ENCODE measurements at regions of chr1 and their contacts with region 1.

Region 1: DNA sequence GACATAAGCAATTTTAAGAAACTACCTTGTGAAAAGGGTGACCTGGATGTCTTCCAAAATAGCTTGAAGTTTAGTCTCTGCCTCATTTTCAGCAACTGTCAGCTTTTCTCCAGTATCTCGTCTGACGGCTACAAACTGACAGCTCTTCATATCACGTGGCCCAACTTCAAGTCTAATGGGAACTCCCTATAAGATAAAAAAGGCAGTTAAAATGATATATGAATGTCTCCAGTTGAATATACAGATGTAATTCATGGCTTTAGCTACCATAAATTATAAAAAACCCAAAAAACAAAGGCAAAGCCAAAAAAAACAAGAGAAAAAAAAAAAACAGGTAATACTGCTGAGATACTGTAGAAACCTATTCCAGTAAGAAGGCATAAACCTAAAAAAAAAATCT is 44.9 kb upstream of the SLC30A10 start:
- DNase-seq: no peak
- ATAC-seq: no peak
- H3K4me3 ChIP-seq: no peak overlapping the region
- H3K4me3 Mint-ChIP-seq: no peak overlapping the region
- H3K27ac ChIP-seq: no peak overlapping the region
- H3K27ac Mint-ChIP-seq: no peak overlapping the region
- H3K4me1 ChIP-seq: no peaks in the 10 kb centered on the region
- H3K4me1 Mint-ChIP-seq: no peaks in the 10 kb centered on the region
- H3K27me3 ChIP-seq: no peaks in the 10 kb centered on the region
- H3K27me3 Mint-ChIP-seq: no peaks in the 10 kb centered on the region
- CTCF ChIP-seq: no peak

Region 2: DNA sequence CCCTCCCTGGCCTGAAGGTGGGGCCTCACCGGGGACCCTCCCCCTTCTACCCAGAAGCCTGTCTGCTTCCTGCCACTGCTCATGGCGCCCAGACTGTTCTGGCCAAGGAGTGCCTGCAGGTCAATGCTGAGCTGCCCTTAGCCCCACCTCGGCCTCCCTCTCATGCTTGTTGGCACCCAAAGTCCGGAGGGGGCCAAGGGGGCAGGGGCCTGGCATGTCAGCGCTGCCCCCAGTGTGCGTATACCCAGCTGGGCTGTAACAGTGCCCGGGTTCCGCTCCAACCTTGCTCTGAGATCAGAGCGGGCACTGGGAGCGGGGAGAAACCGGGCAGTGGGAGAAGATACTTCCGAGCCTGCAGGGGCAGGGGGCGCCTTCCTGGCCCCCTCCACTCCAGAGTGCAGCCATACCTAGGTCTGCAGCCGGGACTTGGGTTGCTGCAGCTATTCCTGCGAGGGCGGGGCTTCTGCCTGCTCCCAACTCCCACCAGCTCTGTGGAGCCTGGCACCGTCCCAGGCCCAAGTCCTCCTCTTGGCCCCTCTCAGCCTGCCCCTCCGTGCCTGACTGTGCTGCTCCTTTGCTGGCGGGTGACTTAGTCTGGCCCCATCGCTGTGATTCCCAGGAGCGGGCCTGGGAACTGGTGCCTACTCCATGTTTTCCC is 1649.5 kb before region 1 on chr1:
- CTCF ChIA-PET with region 1: no interaction called
- POLR2A ChIA-PET with region 1: no interaction called
- intact Hi-C with region 1: loop called in 1 of 2 experiments (anchors 2 kb)
- DNase-seq: no peak
- ATAC-seq: no peak
- H3K4me3 ChIP-seq: no peak overlapping the region
- H3K4me3 Mint-ChIP-seq: no peak overlapping the region
- H3K27ac ChIP-seq: no peak overlapping the region
- H3K27ac Mint-ChIP-seq: no peak overlapping the region
- H3K4me1 ChIP-seq: no peaks in the 10 kb centered on the region
- H3K4me1 Mint-ChIP-seq: no peaks in the 10 kb centered on the region
- H3K27me3 ChIP-seq: no peaks in the 10 kb centered on the region
- H3K27me3 Mint-ChIP-seq: no peaks in the 10 kb centered on the region
- CTCF ChIP-seq: no peak

Region 3: GRCh38 chr1:219897914-219898313 is 75.3 kb before region 1 on chr1:
- CTCF ChIA-PET with region 1: no interaction called
- POLR2A ChIA-PET with region 1: no interaction called
- intact Hi-C with region 1: no loop called
- DNase-seq: no peak
- ATAC-seq: no peak
- H3K4me3 ChIP-seq: no peak overlapping the region
- H3K4me3 Mint-ChIP-seq: no peak overlapping the region
- H3K27ac ChIP-seq: no peak overlapping the region
- H3K27ac Mint-ChIP-seq: no peak overlapping the region
- H3K4me1 ChIP-seq: no peaks in the 10 kb centered on the region
- H3K4me1 Mint-ChIP-seq: no peaks in the 10 kb centered on the region
- H3K27me3 ChIP-seq: no peaks in the 10 kb centered on the region
- H3K27me3 Mint-ChIP-seq: peaks cover 2% of the 10 kb centered on the region
- CTCF ChIP-seq: no peak

Measured in CD8-positive, alpha-beta T cell (primary cell).